PC-9 (cell line): ENCODE measurements at regions of chr10 and their contacts with region 1.

Region 1: DNA sequence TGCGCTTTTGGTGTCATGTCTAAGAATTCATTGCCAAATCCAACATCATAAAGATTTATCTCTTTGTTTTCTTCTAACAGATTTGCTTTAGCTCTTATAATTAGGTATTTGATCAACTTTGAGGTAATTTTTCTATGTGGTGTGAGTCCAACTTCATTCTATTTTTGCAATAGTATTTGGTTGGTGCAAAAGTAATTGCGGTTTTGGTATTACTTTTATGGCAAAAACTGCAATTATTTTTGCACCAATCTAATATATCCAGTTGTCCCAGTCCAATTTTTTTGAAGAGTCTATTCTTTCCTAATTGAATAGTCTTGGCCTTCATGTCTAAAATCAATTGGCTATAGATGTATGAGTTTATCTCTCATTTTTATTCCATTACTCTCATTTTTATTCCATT is 535.5 kb downstream of the ATRNL1 start:
- DNase-seq: no peak
- H3K4me3 ChIP-seq: no peak overlapping the region
- H3K27ac ChIP-seq: no peak overlapping the region
- H3K4me1 ChIP-seq: no peaks in the 10 kb centered on the region
- H3K27me3 ChIP-seq: no peaks in the 10 kb centered on the region
- CTCF ChIP-seq: no peak

Region 2: DNA sequence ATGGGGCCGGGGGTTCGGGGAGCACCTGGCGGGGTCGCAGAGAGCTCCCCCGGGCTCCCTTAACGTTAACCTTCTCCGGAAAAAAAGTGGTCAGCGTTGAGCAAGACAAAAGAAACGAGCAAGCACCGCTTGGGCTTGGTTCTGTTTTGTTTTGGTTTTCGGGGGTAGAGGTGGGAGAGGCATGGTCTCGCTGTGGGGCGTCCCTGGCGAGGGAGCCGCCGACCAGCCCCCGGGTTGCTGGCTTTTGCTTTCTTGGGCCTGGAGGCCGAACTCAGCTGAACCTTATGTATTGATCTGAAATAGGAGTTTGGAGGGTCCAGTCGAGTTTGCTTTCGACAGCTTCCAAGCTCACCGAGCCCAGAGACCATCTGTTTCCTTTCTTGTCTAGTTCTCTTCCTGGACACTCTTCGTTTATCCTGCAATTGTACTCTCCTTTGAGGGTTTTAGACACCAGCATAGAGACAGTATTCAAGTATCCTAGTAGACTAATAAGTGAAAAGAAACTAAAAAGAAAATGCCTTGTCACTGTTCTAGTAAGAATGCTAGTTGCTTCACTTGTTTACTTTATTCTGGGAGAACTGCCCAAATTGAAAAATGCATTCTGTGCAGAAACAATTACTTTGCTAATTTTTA is 806.1 kb before region 1 on chr10:
- CTCF ChIA-PET with region 1: no interaction called
- POLR2A ChIA-PET with region 1: no interaction called
- intact Hi-C with region 1: no loop called
- DNase-seq: peak; percentile 9 to 69
- H3K4me3 ChIP-seq: peak overlapping the region; percentile 82
- H3K27ac ChIP-seq: peak overlapping the region; percentile 97
- H3K4me1 ChIP-seq: peaks cover 29% of the 10 kb centered on the region
- H3K27me3 ChIP-seq: no peaks in the 10 kb centered on the region
- CTCF ChIP-seq: no peak

Region 3: GRCh38 chr10:116353817-116354216 is 725.2 kb after region 1 on chr10:
- CTCF ChIA-PET with region 1: no interaction called
- POLR2A ChIA-PET with region 1: interaction called, 10 read pairs
- intact Hi-C with region 1: no loop called
- DNase-seq: no peak
- H3K4me3 ChIP-seq: no peak overlapping the region
- H3K27ac ChIP-seq: no peak overlapping the region
- H3K4me1 ChIP-seq: no peaks in the 10 kb centered on the region
- H3K27me3 ChIP-seq: no peaks in the 10 kb centered on the region
- CTCF ChIP-seq: no peak